ENCODE measurements at regions of chr9 and their contacts with region 1.

Region 1: GRCh38 chr9:123238365-123238764 is 30.0 kb downstream of the STRBP start:
- DNase-seq: no peak
- H3K4me3 ChIP-seq: no peak overlapping the region
- H3K27ac ChIP-seq: no peak overlapping the region
- H3K4me1 ChIP-seq: no peaks in the 10 kb centered on the region
- H3K27me3 ChIP-seq: no peaks in the 10 kb centered on the region
- CTCF ChIP-seq: no peak

Region 2: DNA sequence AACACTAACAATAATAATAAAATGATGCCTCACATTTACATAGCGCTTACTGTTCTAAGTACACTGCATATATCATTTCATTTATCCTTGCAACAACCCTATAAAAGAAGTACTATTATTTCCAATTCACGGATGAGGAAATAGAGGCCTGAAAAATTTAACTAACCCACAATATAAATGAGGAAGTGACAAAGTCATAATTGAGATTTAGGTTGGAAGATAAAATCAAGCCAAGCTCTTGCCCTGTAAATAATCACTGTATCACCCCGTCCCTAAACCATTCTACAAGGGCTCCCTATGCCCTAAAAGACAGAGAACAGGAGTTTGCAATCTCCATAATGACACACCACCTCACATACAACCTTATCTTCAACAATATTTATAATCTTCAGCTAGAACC is 19.5 kb before region 1 on chr9:
- CTCF ChIA-PET with region 1: no interaction called
- POLR2A ChIA-PET with region 1: no interaction called
- intact Hi-C with region 1: no loop called
- DNase-seq: no peak
- H3K4me3 ChIP-seq: no peak overlapping the region
- H3K27ac ChIP-seq: no peak overlapping the region
- H3K4me1 ChIP-seq: no peaks in the 10 kb centered on the region
- H3K27me3 ChIP-seq: no peaks in the 10 kb centered on the region
- CTCF ChIP-seq: no peak

Region 3: DNA sequence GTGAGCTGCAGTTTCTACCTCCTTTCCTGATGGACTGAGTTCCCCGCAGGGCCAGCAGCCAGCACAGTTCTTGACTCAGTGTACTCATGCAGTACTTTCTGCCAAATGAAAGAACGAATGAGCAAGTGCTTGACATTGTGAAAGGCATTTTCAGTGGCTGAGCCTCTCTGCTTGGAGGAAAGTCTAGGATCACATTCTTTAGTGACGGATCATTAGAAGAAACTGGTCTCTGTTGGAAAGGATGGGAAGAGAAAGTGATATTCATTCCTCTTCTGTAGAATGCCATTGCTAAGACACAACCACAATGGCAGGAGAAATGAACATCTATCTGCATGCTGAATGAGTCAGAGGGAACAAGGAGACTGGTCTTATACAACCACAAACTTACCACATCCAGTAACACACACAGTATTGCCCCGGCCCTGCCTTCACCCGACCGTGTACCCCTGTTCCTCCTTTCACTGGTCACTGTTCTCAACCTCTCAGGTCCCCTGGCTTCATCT is 324.5 kb after region 1 on chr9:
- CTCF ChIA-PET with region 1: no interaction called
- POLR2A ChIA-PET with region 1: no interaction called
- intact Hi-C with region 1: no loop called
- DNase-seq: no peak
- H3K4me3 ChIP-seq: no peak overlapping the region
- H3K27ac ChIP-seq: no peak overlapping the region
- H3K4me1 ChIP-seq: no peaks in the 10 kb centered on the region
- H3K27me3 ChIP-seq: no peaks in the 10 kb centered on the region
- CTCF ChIP-seq: no peak

Region 4: GRCh38 chr9:123861086-123861707 is 622.8 kb after region 1 on chr9:
- CTCF ChIA-PET with region 1: interaction called, 16 read pairs
- POLR2A ChIA-PET with region 1: no interaction called
- intact Hi-C with region 1: no loop called
- DNase-seq: no peak
- H3K4me3 ChIP-seq: no peak overlapping the region
- H3K27ac ChIP-seq: no peak overlapping the region
- H3K4me1 ChIP-seq: no peaks in the 10 kb centered on the region
- H3K27me3 ChIP-seq: no peaks in the 10 kb centered on the region
- CTCF ChIP-seq: no peak

Measured in PC-9 (cell line).